ENCODE measurements at regions of chr1 and their contacts with region 1.

Region 1: DNA sequence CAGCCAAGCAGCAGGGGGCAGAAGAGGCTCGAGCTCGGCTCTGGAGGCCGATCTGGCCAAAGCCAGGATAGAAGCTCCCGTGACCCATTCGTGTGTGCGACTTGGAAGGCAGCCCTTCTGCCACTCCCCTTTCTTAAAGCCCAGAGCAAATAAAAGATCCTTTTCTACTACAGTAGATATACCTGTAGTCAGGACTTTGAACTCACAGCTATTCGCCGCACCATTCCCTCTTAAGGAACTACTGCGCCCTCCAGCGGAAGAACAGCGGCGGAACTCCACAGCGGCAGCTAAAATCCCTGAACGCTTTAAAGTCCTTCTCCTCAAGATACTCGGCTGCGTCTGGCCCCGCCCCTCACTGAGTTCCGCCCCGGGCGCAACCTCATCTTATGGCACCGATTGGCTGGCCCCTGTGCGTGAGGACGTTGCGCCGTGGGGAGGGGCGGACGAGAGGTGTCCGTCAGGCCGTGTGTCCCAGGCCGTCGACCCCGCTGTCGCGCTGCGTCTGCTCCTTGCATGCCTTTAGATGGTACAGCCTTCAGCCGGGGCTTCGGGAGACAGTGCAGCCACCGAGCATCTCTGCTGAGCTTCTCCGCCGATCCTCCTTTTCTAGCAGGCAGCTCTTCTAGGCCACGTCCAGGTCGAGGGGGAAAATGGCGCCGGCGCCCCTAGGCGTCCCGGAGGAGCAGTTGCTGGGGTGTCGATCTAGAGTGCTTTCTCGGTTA is at the start of gene LRIG2:
- DNase-seq: peak; percentile 95 to 99 (median 96)
- H3K4me3 ChIP-seq: peak within 1 kb of the TSS; percentile 85 to 95
- H3K4me3 Mint-ChIP-seq: peak within 1 kb of the TSS; percentile 97 to 99 (median 98)
- H3K27ac ChIP-seq: peak within 1 kb of the TSS; percentile 80
- H3K27ac Mint-ChIP-seq: peak within 1 kb of the TSS; percentile 95 to 99 (median 97)
- H3K4me1 ChIP-seq: peaks cover 35% of the 10 kb centered on the region
- H3K4me1 Mint-ChIP-seq: peaks cover 15 to 54% (median 29%) of the 10 kb centered on the region in 4 donors
- H3K27me3 ChIP-seq: no peaks in the 10 kb centered on the region
- H3K27me3 Mint-ChIP-seq: peaks cover 0 to 1% of the 10 kb centered on the region in 2 donors
- total RNA-seq, gene LRIG2: 24.2 to 27.9 TPM

Region 2: GRCh38 chr1:112390775-112391602 is 681.9 kb before region 1 on chr1:
- CTCF ChIA-PET with region 1: interaction called, 7 read pairs
- POLR2A ChIA-PET with region 1: interaction called, 3 read pairs
- intact Hi-C with region 1: loop called (anchors 2 kb)
- DNase-seq: peak; percentile 72 to 79 (median 78)
- H3K4me3 ChIP-seq: no peak overlapping the region
- H3K4me3 Mint-ChIP-seq: peak overlapping the region in 5 of 8 donors; percentile 1 to 71 (median 40)
- H3K27ac ChIP-seq: no peak overlapping the region
- H3K27ac Mint-ChIP-seq: peak overlapping the region in 1 of 7 donors; percentile 9
- H3K4me1 ChIP-seq: peaks cover 13% of the 10 kb centered on the region
- H3K4me1 Mint-ChIP-seq: peaks cover 9 to 15% (median 10%) of the 10 kb centered on the region in 4 donors
- H3K27me3 ChIP-seq: peaks cover 4% of the 10 kb centered on the region
- H3K27me3 Mint-ChIP-seq: peaks cover 12 to 24% of the 10 kb centered on the region in 2 donors

Region 3: DNA sequence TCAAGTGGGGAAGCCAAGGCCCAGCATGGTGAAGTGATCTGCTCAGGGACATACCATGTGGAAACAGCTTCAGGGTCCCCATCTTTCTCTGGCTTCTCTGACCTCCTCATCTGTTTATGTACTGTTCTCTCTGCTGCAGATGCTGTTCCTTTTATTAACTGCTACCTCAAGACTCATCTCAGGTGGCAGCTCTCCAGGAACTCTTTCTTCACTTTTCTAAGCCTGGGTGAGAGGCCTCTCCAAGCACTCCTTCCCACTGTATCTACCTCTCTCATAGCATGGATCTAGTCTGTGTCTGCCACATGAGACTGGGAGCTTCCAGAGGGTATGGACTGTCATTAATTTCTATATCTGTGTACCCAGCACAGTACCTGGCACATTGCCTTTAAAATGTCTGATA is 284.4 kb before region 1 on chr1:
- CTCF ChIA-PET with region 1: no interaction called
- POLR2A ChIA-PET with region 1: no interaction called
- intact Hi-C with region 1: no loop called
- DNase-seq: no peak
- H3K4me3 ChIP-seq: no peak overlapping the region
- H3K4me3 Mint-ChIP-seq: no peak overlapping the region
- H3K27ac ChIP-seq: no peak overlapping the region
- H3K27ac Mint-ChIP-seq: no peak overlapping the region
- H3K4me1 ChIP-seq: no peaks in the 10 kb centered on the region
- H3K4me1 Mint-ChIP-seq: no peaks in the 10 kb centered on the region
- H3K27me3 ChIP-seq: no peaks in the 10 kb centered on the region
- H3K27me3 Mint-ChIP-seq: peaks cover 2 to 3% of the 10 kb centered on the region in 2 donors

Region 4: GRCh38 chr1:112809253-112809684 is 263.6 kb before region 1 on chr1:
- CTCF ChIA-PET with region 1: interaction called, 9 read pairs
- POLR2A ChIA-PET with region 1: no interaction called
- intact Hi-C with region 1: loop called (anchors 2 kb)
- DNase-seq: peak; percentile 25 to 50 (median 44)
- H3K4me3 ChIP-seq: no peak overlapping the region
- H3K4me3 Mint-ChIP-seq: no peak overlapping the region
- H3K27ac ChIP-seq: no peak overlapping the region
- H3K27ac Mint-ChIP-seq: no peak overlapping the region
- H3K4me1 ChIP-seq: no peaks in the 10 kb centered on the region
- H3K4me1 Mint-ChIP-seq: peaks cover 0 to 1% (median 0%) of the 10 kb centered on the region in 4 donors
- H3K27me3 ChIP-seq: no peaks in the 10 kb centered on the region
- H3K27me3 Mint-ChIP-seq: peaks cover 0 to 2% of the 10 kb centered on the region in 2 donors

Region 5: DNA sequence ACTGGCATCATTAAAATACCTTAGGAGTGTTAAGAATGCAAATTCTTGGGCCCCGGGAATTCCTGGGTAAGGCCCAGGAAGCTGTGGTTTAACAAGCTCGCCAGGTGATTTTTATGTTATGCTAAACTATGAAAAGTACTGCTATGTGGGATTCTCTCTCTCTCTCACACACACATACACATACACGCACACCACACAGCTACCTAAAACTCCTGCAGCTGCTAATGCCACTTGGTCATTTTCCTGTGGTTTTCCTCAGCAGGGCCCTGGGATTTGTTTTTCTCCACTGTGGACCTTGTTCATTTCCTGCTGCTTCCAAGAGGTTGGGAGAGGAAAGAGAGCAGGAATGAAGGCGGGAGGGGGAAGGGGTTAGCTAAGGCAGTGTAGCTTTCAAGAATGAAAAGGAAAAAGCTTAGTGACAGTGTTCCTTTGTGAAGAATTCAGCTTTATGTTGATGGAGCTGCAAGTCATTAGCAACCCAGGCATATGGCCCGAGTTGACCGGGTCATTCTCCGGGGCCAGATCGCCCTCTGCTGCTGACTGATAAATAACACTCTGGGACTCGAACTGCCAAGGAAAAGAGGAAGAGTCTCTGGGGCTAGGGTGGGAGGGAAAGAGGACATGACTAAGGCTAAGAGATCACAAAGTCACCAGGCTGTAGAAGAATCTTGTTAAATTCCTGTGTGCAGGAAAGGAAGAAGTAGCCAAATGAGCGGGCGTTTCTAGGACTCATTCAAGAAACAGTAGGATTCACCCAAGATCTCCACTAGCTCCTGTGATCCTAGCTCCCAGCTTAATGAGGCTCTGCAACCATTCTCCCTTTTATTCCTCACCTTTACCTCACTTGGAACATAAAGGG is 30.4 kb before region 1 on chr1:
- CTCF ChIA-PET with region 1: interaction called, 16 read pairs
- POLR2A ChIA-PET with region 1: interaction called, 4 read pairs
- intact Hi-C with region 1: no loop called
- DNase-seq: no peak
- H3K4me3 ChIP-seq: no peak overlapping the region
- H3K4me3 Mint-ChIP-seq: peak overlapping the region in 3 of 8 donors; percentile 12 to 32 (median 27)
- H3K27ac ChIP-seq: no peak overlapping the region
- H3K27ac Mint-ChIP-seq: peak overlapping the region in 5 of 7 donors; percentile 43 to 85 (median 78)
- H3K4me1 ChIP-seq: peaks cover 23% of the 10 kb centered on the region
- H3K4me1 Mint-ChIP-seq: peaks cover 20 to 41% (median 29%) of the 10 kb centered on the region in 4 donors
- H3K27me3 ChIP-seq: no peaks in the 10 kb centered on the region
- H3K27me3 Mint-ChIP-seq: no peaks in the 10 kb centered on the region

Region 6: DNA sequence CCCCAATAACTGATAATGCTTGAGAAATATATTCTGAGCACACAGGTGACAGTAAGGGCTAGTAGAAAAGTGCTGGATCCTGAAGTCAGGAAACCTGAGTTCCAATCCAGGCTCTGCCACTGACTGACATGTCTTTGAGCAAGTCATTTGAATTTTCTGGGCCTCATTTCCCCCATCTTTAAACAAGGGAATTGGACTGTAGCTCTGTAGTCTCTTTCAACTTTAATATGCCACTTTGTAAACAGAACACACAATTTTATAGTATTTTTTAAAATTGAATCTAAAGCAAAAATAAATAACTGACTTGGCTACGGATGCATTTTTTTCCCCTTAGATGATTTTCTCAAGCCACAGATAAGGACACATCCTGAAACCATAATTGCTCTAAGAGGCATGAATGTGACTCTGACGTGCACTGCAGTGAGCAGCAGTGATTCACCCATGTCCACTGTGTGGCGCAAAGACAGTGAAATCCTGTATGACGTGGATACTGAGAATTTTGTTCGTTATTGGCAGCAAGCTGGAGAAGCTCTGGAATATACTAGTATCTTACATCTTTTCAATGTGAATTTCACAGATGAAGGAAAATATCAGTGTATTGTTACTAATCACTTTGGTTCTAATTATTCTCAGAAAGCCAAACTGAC is 37.1 kb after region 1 on chr1:
- CTCF ChIA-PET with region 1: interaction called, 13 read pairs
- POLR2A ChIA-PET with region 1: interaction called, 4 read pairs
- intact Hi-C with region 1: loop called (anchors 5 kb)
- DNase-seq: no peak
- H3K4me3 ChIP-seq: no peak overlapping the region
- H3K4me3 Mint-ChIP-seq: no peak overlapping the region
- H3K27ac ChIP-seq: no peak overlapping the region
- H3K27ac Mint-ChIP-seq: no peak overlapping the region
- H3K4me1 ChIP-seq: no peaks in the 10 kb centered on the region
- H3K4me1 Mint-ChIP-seq: peaks cover 0 to 2% (median under 1%) of the 10 kb centered on the region in 4 donors
- H3K27me3 ChIP-seq: no peaks in the 10 kb centered on the region
- H3K27me3 Mint-ChIP-seq: no peaks in the 10 kb centered on the region

Region 7: GRCh38 chr1:113904674-113905434 is 831.9 kb after region 1 on chr1 and contains the starts of genes AP4B1 and DCLRE1B:
- CTCF ChIA-PET with region 1: interaction called, 3 read pairs
- POLR2A ChIA-PET with region 1: no interaction called
- intact Hi-C with region 1: loop called (anchors 10 kb)
- DNase-seq: peak; percentile 97 to 99 (median 98)
- H3K4me3 ChIP-seq: peak within 1 kb of the TSS; percentile 68 to 98
- H3K4me3 Mint-ChIP-seq: peak within 1 kb of the TSS; percentile 94 to 100 (median 99)
- H3K27ac ChIP-seq: peak within 1 kb of the TSS; percentile 96
- H3K27ac Mint-ChIP-seq: peak within 1 kb of the TSS; percentile 96 to 100 (median 100)
- H3K4me1 ChIP-seq: peaks cover 44% of the 10 kb centered on the region
- H3K4me1 Mint-ChIP-seq: peaks cover 36 to 74% (median 47%) of the 10 kb centered on the region in 4 donors
- H3K27me3 ChIP-seq: no peaks in the 10 kb centered on the region
- H3K27me3 Mint-ChIP-seq: no peaks in the 10 kb centered on the region
- total RNA-seq, gene AP4B1: 74.5 to 75.5 TPM
- total RNA-seq, gene DCLRE1B: 5.1 to 5.4 TPM